ENCODE measurements at regions of chr15 and their contacts with region 1.

Region 1: DNA sequence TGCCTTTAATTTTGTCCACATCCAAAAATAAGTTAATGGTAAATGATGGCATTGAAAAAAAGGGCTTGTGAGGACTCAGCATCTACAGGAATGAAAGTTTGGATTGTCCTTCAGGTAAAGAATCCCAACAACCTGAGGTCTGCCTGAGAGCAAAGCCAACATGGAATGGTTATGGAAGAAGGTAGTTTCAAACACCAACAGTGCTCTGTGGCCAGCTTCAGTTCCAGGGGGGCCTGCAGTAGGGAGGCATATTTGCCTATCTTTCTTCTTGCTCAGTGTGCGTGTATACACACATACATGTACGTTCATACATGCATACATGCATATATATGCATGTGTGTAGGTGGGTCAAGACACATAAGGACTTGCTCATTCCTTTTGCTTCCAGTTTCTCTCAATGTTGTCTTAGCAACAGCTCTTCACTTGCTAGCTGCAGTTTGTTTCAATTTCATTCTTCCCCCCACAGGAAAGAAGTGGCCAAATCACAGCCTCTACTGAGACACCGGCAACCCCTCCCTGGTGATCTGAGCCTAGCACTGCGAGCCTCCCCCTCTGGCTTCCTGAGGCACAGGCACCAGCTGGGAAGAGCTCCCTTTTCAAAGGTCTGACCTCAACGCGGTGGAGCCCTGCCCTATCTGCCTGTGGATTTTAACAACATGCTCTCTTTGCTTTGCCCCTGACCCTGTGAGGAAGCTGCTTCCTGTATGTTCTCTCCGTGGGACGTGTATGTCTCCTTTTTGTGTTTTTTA is 146.2 kb downstream of the KLF13 start:
- DNase-seq: peak in 13 of 14 experiments; percentile 28 to 86 (median 43)
- ATAC-seq: peak; percentile 91
- H3K4me3 ChIP-seq: peak overlapping the region; percentile 46
- H3K4me3 Mint-ChIP-seq: peak overlapping the region; percentile 67
- H3K27ac ChIP-seq: peak overlapping the region; percentile 55 to 69
- H3K27ac Mint-ChIP-seq: peak overlapping the region; percentile 83
- H3K4me1 ChIP-seq: peaks cover 57% of the 10 kb centered on the region
- H3K4me1 Mint-ChIP-seq: peaks cover 45% of the 10 kb centered on the region
- H3K27me3 ChIP-seq: no peaks in the 10 kb centered on the region
- H3K27me3 Mint-ChIP-seq: no peaks in the 10 kb centered on the region
- CTCF ChIP-seq: no peak

Region 2: DNA sequence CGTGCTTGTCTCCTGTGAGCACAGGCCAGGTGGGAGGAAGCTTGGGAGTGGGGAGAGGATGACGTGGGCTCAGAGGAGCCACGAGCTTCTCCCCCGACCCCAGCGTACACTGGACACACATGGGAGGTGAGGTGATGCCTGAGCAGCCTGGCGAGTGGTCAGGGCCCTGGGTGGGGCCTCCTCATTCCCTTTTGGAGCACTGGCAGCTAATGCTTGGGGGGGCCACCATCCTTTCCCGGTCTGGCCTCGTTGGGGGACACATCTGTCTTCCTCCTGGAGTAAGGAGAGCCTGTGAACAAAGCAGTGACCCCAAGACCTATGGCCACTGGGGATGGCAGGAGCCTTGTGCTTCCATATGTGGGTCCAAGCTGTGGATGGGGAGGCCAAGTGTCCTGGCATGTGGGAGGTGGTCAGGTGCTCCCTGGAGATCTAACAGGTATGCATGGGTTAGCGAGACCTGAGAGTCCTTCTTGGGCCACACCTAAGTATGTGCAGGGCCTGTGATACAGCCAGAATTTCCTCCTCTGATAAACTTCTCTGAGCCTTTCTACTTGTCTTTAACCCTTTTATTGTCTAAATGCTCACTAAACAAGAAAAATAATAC is 136.7 kb before region 1 on chr15:
- CTCF ChIA-PET with region 1: no interaction called
- POLR2A ChIA-PET with region 1: no interaction called
- intact Hi-C with region 1: no loop called
- DNase-seq: no peak
- ATAC-seq: no peak
- H3K4me3 ChIP-seq: no peak overlapping the region
- H3K4me3 Mint-ChIP-seq: peak overlapping the region; percentile 67
- H3K27ac ChIP-seq: peak overlapping the region; percentile 51 to 57
- H3K27ac Mint-ChIP-seq: peak overlapping the region; percentile 80
- H3K4me1 ChIP-seq: peaks cover 99% of the 10 kb centered on the region
- H3K4me1 Mint-ChIP-seq: peaks cover 98% of the 10 kb centered on the region
- H3K27me3 ChIP-seq: no peaks in the 10 kb centered on the region
- H3K27me3 Mint-ChIP-seq: no peaks in the 10 kb centered on the region
- CTCF ChIP-seq: no peak

Region 3: DNA sequence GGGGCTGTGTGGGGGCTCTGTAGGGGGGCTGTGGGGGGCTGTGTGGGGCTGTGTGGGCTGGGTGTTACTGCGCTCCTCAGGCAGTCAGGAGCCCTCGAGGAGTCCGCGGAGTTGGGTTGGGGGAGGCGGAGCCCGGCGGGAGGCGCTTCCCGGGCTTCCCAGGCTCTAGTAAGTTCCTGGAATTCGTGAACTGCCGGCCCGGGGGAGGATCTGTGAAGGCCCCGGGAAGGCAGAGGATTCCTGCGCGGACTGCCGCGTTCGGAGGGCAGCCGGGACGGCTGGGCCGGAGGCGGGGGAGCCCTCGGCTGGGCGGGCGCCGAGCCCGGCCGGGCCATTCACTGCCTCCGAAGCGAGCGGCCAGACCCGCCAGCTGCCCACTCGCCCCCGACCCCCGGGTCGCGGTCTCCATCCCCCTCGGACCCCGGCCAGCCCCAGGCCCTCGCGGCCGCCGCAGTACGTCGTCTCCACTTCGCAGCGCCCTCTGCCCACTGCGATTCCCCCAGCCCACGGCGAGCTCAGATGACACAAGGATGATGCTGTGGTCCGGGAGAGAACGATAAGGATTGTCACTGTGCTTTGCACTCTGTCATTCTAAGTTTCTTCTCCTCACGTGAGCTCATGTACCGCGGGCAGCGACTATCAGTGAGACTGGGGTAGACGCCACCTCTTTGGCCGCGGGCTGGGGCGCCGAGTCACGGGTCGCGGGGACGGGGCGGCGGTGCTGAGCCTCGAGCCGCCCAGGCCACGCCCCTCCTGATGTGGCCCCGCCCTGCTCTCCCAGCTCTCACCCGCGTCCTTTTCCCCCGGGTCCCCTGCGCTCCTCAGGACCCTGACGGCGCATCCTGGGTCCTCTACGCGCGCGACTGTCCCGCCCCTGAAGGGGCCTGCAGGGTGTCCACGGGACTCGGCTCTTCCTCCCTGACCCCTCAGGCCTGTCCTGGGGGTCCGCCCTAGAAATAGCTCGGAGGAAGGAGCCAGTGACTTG is 80.8 kb before region 1 on chr15:
- CTCF ChIA-PET with region 1: no interaction called
- POLR2A ChIA-PET with region 1: interaction called, 14 read pairs
- intact Hi-C with region 1: no loop called
- DNase-seq: peak; percentile 65 to 93 (median 82)
- ATAC-seq: peak; percentile 87
- H3K4me3 ChIP-seq: peak overlapping the region; percentile 75
- H3K4me3 Mint-ChIP-seq: peak overlapping the region; percentile 95
- H3K27ac ChIP-seq: peak overlapping the region; percentile 8 to 37
- H3K27ac Mint-ChIP-seq: peak overlapping the region; percentile 86
- H3K4me1 ChIP-seq: peaks cover 51% of the 10 kb centered on the region
- H3K4me1 Mint-ChIP-seq: peaks cover 52% of the 10 kb centered on the region
- H3K27me3 ChIP-seq: no peaks in the 10 kb centered on the region
- H3K27me3 Mint-ChIP-seq: no peaks in the 10 kb centered on the region
- CTCF ChIP-seq: no peak